CD8-positive, alpha-beta T cell (primary cell): ENCODE measurements at regions of chr1 and their contacts with region 1.

Region 1: GRCh38 chr1:225754940-225755641 is 22.5 kb upstream of the SRP9 start:
- DNase-seq: no peak
- ATAC-seq: no peak
- H3K4me3 ChIP-seq: no peak overlapping the region
- H3K4me3 Mint-ChIP-seq: no peak overlapping the region
- H3K27ac ChIP-seq: no peak overlapping the region
- H3K27ac Mint-ChIP-seq: no peak overlapping the region
- H3K4me1 ChIP-seq: no peaks in the 10 kb centered on the region
- H3K4me1 Mint-ChIP-seq: no peaks in the 10 kb centered on the region
- H3K27me3 ChIP-seq: no peaks in the 10 kb centered on the region
- H3K27me3 Mint-ChIP-seq: peaks cover 3% of the 10 kb centered on the region
- CTCF ChIP-seq: no peak

Region 2: DNA sequence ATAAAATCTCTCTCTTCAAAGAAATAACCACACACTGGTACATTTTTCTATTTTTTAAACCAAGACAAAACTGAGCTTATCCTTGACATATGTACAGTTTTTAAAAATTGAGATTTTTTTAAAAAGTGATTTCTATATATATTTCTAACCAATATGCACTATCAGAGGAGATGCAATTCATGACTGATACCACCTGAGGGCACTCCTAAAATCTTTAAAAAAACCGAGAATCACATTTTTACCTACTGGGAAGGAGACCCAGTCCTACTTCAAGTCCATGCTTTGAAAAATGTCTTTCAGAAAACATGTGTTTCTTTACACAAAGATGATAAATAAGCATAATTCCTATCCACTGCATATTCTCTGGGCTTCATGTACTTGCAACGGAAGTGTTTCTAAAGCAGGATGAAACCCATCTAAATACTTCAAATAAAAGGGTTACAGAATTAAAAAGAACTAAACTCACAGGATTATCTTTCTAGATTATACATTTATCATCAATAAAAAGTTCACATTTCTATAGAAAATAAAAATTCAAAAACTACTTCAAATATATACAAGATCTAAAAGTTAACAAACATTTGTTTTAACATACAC is 200.8 kb before region 1 on chr1:
- CTCF ChIA-PET with region 1: no interaction called
- POLR2A ChIA-PET with region 1: no interaction called
- intact Hi-C with region 1: loop called in 1 of 2 experiments (anchors 10 kb)
- DNase-seq: peak in 2 of 9 experiments; percentile 26 to 43
- ATAC-seq: peak; percentile 40
- H3K4me3 ChIP-seq: no peak overlapping the region
- H3K4me3 Mint-ChIP-seq: no peak overlapping the region
- H3K27ac ChIP-seq: no peak overlapping the region
- H3K27ac Mint-ChIP-seq: no peak overlapping the region
- H3K4me1 ChIP-seq: no peaks in the 10 kb centered on the region
- H3K4me1 Mint-ChIP-seq: no peaks in the 10 kb centered on the region
- H3K27me3 ChIP-seq: no peaks in the 10 kb centered on the region
- H3K27me3 Mint-ChIP-seq: peaks cover 2% of the 10 kb centered on the region
- CTCF ChIP-seq: peak; percentile 63

Region 3: GRCh38 chr1:225794954-225795353 is 39.9 kb after region 1 on chr1:
- CTCF ChIA-PET with region 1: no interaction called
- POLR2A ChIA-PET with region 1: no interaction called
- intact Hi-C with region 1: no loop called
- DNase-seq: no peak
- ATAC-seq: no peak
- H3K4me3 ChIP-seq: no peak overlapping the region
- H3K4me3 Mint-ChIP-seq: no peak overlapping the region
- H3K27ac ChIP-seq: no peak overlapping the region
- H3K27ac Mint-ChIP-seq: no peak overlapping the region
- H3K4me1 ChIP-seq: no peaks in the 10 kb centered on the region
- H3K4me1 Mint-ChIP-seq: peaks cover 4% of the 10 kb centered on the region
- H3K27me3 ChIP-seq: no peaks in the 10 kb centered on the region
- H3K27me3 Mint-ChIP-seq: no peaks in the 10 kb centered on the region
- CTCF ChIP-seq: no peak

Region 4: DNA sequence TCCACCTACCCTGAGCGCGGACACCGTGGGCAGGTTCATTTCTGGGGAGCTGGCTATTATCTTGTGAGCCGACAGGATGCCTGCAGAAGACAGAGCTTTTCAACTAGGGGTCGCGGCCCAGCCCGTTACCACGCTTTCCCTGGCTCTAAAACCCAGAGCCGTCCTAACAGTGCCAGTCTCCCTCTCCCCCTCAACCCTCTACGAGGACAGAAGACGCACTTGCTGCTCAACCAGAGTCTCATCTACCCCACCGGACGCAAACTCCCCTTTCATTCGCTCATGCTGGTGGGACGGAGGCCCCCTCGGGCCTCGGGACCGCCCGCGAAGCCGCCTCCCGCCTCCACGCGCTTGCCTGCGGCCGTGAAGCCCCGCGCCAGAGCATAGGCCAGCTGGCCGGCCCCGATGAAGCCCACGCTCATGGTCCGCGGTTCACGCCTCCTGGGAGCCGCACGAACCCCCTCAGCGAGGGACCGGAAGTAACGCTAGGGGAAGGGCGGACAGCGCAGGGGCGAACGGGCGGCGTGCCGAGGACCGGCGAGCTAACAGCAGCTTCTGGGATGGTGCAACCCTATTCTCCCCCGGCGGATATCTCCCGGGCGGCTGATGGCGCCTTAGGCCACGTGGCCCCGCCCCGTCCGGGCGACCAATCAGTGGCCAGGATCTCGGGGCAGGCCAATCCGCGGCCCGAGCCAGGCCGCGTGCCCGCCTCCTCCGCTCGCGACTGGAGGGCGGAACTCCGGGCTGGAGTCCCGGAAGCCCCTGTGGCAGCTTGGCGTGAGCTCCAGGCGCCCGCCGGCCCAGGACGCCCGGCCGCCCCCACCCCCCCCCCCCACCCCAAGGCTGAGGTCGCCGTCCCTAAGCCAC is 168.8 kb after region 1 on chr1 and contains the start of gene PYCR2:
- CTCF ChIA-PET with region 1: no interaction called
- POLR2A ChIA-PET with region 1: no interaction called
- intact Hi-C with region 1: no loop called
- DNase-seq: peak; percentile 90 to 98 (median 92)
- ATAC-seq: peak; percentile 98
- H3K4me3 ChIP-seq: peak within 1 kb of the TSS; percentile 75 to 79
- H3K4me3 Mint-ChIP-seq: peak within 1 kb of the TSS; percentile 94
- H3K27ac ChIP-seq: peak within 1 kb of the TSS; percentile 75 to 91
- H3K27ac Mint-ChIP-seq: peak within 1 kb of the TSS; percentile 93
- H3K4me1 ChIP-seq: peaks cover 75% of the 10 kb centered on the region
- H3K4me1 Mint-ChIP-seq: peaks cover 63% of the 10 kb centered on the region
- H3K27me3 ChIP-seq: no peaks in the 10 kb centered on the region
- H3K27me3 Mint-ChIP-seq: no peaks in the 10 kb centered on the region
- CTCF ChIP-seq: no peak
- total RNA-seq, gene PYCR2: 27.3 to 30.6 TPM

Region 5: DNA sequence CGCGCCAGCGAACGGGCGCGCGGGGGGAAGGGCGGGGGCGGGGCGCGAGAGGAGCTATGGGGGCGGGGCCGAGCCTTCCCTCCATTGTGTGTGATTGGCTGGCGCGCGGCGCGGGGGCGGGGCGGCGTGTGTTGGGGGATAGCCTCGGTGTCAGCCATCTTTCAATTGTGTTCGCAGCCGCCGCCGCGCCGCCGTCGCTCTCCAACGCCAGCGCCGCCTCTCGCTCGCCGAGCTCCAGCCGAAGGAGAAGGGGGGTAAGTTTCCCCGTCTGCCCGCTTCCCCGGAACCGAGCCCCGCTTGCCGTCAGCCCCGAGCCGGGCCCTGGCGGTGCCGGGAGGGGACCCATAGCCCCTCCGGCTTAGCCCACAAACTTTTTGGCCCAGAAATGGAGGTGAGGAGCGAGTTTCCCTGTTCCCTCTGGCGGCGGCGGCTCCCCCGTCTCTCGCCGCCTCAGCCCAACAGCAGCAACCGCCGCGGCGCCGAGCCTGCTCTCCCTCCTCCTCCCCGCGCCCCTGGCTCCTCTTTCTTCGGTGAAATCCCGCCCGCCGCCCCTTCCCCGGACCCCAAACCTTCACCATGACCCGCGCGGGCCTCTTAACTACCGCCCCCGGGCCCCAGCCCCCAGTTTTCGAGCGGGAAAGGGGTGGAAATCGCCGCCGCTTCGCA is 307.6 kb after region 1 on chr1 and contains the start of gene H3-3A:
- CTCF ChIA-PET with region 1: no interaction called
- POLR2A ChIA-PET with region 1: no interaction called
- intact Hi-C with region 1: no loop called
- DNase-seq: peak; percentile 96 to 99 (median 98)
- ATAC-seq: peak; percentile 85
- H3K4me3 ChIP-seq: peak within 1 kb of the TSS; percentile 84 to 92
- H3K4me3 Mint-ChIP-seq: peak within 1 kb of the TSS; percentile 100
- H3K27ac ChIP-seq: peak within 1 kb of the TSS; percentile 90 to 91
- H3K27ac Mint-ChIP-seq: peak within 1 kb of the TSS; percentile 100
- H3K4me1 ChIP-seq: peaks cover 42% of the 10 kb centered on the region
- H3K4me1 Mint-ChIP-seq: peaks cover 49% of the 10 kb centered on the region
- H3K27me3 ChIP-seq: no peaks in the 10 kb centered on the region
- H3K27me3 Mint-ChIP-seq: no peaks in the 10 kb centered on the region
- CTCF ChIP-seq: no peak
- total RNA-seq, gene H3-3A: 439 to 447 TPM